ENCODE measurements at regions of chr1 and their contacts with region 1.

Region 1: GRCh38 chr1:9910425-9911178 is 533 bp upstream of the CTNNBIP1 start:
- DNase-seq: peak; percentile 99
- H3K4me3 ChIP-seq: peak overlapping the region; percentile 56 to 61 (median 58)
- H3K27ac ChIP-seq: peak overlapping the region; percentile 67
- H3K4me1 ChIP-seq: peaks cover 15% of the 10 kb centered on the region
- H3K27me3 ChIP-seq: no peaks in the 10 kb centered on the region
- CTCF ChIP-seq: no peak

Region 2: GRCh38 chr1:9724706-9725476 is 185.7 kb before region 1 on chr1:
- CTCF ChIA-PET with region 1: no interaction called
- dilution Hi-C with region 1: no loop called
- in situ Hi-C with region 1: no loop called
- intact Hi-C with region 1: loop called (anchors 1 kb)
- DNase-seq: peak; percentile 45
- H3K4me3 ChIP-seq: no peak overlapping the region
- H3K27ac ChIP-seq: no peak overlapping the region
- H3K4me1 ChIP-seq: peaks cover 27% of the 10 kb centered on the region
- H3K27me3 ChIP-seq: no peaks in the 10 kb centered on the region
- CTCF ChIP-seq: peak; percentile 87 to 91

Region 3: DNA sequence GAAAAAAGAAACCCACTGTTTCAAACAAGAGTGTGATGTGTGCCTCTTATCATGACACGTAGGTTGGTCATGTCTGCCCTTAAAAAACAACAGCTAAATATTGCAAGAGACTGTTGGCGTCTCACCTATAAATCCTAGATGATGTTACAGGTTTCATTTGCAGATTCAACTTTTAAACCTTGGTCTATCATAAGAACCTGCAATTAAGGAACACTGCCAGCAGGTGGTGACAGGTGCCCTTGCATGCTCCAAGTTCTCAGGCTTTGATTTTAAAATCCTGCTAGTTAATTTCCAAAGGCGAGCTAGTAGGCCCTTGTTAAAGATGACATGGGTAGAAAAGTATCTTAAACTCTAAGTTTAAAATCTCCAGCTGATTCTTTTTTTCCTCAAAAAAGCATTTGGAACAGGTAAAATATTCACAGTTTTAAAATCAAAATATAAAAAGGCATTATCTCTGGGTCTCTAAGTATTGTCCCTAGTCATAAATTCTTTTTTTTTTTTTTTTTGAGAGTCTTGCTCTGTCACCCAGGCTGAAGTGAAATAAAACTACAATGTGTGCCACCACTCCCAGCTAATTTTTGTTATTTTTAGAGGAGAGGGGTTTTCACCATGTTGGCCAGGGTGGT is 126.0 kb before region 1 on chr1:
- CTCF ChIA-PET with region 1: interaction called, 4 read pairs
- dilution Hi-C with region 1: no loop called
- in situ Hi-C with region 1: no loop called
- intact Hi-C with region 1: loop called (anchors 2 kb)
- DNase-seq: peak; percentile 52
- H3K4me3 ChIP-seq: no peak overlapping the region
- H3K27ac ChIP-seq: no peak overlapping the region
- H3K4me1 ChIP-seq: peaks cover 12% of the 10 kb centered on the region
- H3K27me3 ChIP-seq: no peaks in the 10 kb centered on the region
- CTCF ChIP-seq: peak; percentile 79 to 84

Region 4: GRCh38 chr1:9874959-9875635 is 35.5 kb before region 1 on chr1:
- CTCF ChIA-PET with region 1: interaction called, 6 read pairs
- dilution Hi-C with region 1: no loop called
- in situ Hi-C with region 1: loop called in 1 of 2 experiments (anchors 5 kb)
- intact Hi-C with region 1: loop called (anchors 1 kb)
- DNase-seq: peak; percentile 49
- H3K4me3 ChIP-seq: no peak overlapping the region
- H3K27ac ChIP-seq: no peak overlapping the region
- H3K4me1 ChIP-seq: peaks cover 35% of the 10 kb centered on the region
- H3K27me3 ChIP-seq: no peaks in the 10 kb centered on the region
- CTCF ChIP-seq: peak; percentile 79 to 97

Region 5: DNA sequence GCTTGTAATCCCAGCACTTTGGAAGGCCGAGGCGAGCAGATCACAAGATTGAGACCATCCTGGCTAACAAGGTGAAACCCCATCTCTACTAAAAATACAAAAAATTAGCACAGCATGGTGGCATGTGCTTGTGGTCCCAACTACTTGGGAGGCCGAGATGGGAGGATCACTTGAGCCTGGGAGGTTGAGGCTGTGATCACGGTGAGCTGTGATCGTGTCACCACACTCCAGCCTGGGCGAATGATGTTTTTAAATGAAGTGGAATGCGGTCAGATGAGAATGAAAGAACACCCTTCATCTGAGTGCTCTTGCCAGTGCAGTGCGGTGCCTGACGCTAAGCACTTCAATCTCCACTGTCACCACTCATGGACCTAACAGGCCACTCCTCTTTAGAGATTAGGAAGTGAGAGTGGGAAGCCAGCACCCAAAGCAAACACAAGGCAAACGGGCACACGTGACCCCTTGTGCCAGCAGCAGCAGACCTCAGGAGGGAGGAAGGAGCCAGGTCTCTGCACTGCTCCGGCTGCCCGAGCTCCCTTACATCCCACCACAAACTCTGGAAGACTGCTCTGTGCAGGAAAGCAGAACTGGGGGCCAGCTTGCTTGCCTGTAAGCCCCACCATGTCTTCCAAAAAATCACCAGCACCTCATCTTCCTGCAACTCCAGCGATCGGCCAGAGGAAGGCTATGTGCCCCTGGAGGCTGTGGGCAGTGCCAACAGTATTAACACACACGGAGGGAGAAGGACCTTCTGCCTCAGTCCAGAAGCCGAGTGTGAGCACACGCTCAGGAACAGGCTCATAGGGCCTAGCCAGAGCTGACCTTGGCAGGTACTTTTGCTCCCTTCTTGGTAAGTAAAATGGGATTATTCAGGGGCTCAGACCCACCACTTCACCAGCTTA is 10.2 kb before region 1 on chr1:
- CTCF ChIA-PET with region 1: interaction called, 4 read pairs
- dilution Hi-C with region 1: no loop called
- in situ Hi-C with region 1: no loop called
- intact Hi-C with region 1: loop called (anchors 1 kb)
- DNase-seq: no peak
- H3K4me3 ChIP-seq: no peak overlapping the region
- H3K27ac ChIP-seq: no peak overlapping the region
- H3K4me1 ChIP-seq: peaks cover 24% of the 10 kb centered on the region
- H3K27me3 ChIP-seq: no peaks in the 10 kb centered on the region
- CTCF ChIP-seq: no peak

Region 6: GRCh38 chr1:9942939-9943788 is 32.6 kb after region 1 on chr1 and contains the starts of genes LZIC and NMNAT1:
- CTCF ChIA-PET with region 1: no interaction called
- dilution Hi-C with region 1: no loop called
- in situ Hi-C with region 1: no loop called
- intact Hi-C with region 1: loop called (anchors 1 kb)
- DNase-seq: peak; percentile 95
- H3K4me3 ChIP-seq: peak within 1 kb of the TSS; percentile 66 to 77 (median 67)
- H3K27ac ChIP-seq: peak within 1 kb of the TSS; percentile 95
- H3K4me1 ChIP-seq: peaks cover 5% of the 10 kb centered on the region
- H3K27me3 ChIP-seq: no peaks in the 10 kb centered on the region
- CTCF ChIP-seq: no peak
- total RNA-seq, gene LZIC: 19.8 to 30.6 TPM
- total RNA-seq, gene NMNAT1: 9.7 to 11.1 TPM

Region 7: GRCh38 chr1:10074059-10074851 is 163.7 kb after region 1 on chr1:
- CTCF ChIA-PET with region 1: no interaction called
- dilution Hi-C with region 1: no loop called
- in situ Hi-C with region 1: no loop called
- intact Hi-C with region 1: no loop called
- DNase-seq: peak; percentile 96
- H3K4me3 ChIP-seq: no peak overlapping the region
- H3K27ac ChIP-seq: peak overlapping the region; percentile 62
- H3K4me1 ChIP-seq: peaks cover 32% of the 10 kb centered on the region
- H3K27me3 ChIP-seq: no peaks in the 10 kb centered on the region
- CTCF ChIP-seq: no peak